ENCODE measurements at regions of chr19 and their contacts with region 1.

Region 1: DNA sequence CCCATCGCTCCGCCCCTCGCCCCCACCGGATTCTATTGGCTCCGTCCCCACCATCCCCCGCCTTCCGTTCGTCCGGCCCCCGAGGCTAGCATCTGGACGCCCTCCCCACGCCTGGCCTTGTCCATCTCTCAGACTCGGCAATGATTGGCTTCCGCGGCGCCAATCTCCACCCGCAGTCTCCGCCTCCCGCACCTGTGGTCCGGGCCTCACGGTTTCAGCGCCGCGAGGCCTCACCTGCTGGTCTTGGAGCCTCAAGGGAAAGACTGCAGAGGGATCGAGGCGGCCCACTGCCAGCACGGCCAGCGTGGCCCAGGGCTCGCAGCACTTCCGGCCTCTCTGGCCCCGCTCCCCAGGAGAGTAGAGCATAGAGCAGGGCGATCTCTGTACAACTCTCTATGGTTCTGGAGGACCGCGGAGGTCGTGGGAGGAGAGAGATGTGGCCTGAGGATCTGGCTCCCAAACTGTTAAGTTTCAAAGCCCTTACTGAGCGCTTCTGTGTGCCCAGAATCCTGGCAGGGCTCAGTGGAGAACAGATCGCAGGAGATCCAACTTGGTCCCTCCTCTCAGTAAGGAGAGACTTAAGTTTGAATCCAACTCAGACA is at the start of gene ERCC1:
- DNase-seq: peak; percentile 96
- ATAC-seq: peak; percentile 82
- H3K4me3 ChIP-seq: peak within 1 kb of the TSS; percentile 93 to 96
- H3K27ac ChIP-seq: peak within 1 kb of the TSS; percentile 99
- H3K4me1 ChIP-seq: peaks cover 38 to 77% of the 10 kb centered on the region in 2 experiments
- H3K27me3 ChIP-seq: no peaks in the 10 kb centered on the region
- CTCF ChIP-seq: no peak
- POLR2A ChIP-seq: peak; percentile 84
- RAD21 ChIP-seq: no peak
- total RNA-seq, gene ERCC1: 103 TPM

Region 2: DNA sequence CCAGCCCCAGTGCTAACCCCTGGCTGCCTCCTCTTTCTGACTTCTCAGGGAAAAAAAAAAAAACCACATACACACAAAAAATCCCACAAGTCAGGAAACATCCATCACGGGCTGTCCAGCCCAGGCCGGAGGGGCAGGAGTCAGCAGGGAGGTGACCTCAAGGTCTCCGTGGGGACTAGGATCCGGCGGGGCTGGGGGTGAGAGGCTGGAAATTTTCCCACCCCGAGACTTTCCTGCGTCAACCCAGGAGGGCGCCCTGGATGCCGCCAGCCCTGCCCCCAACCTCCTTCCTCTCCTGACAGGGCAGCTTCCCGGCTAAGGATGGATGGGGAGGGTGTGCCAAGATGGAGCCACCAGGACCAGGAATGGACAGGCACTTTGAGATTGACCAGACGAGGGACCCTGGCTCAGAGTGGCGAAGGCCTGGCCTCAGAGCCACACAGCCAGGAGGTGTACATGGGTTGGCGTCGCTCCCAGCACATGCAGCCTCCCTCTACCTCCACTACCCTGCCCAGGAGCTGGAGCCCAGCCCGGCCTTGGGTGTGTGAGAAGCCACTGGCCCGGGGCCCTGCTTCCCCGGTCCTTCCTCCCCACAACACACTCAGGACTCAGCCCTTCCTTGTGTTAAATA is 211.8 kb before region 1 on chr19:
- CTCF ChIA-PET with region 1: no interaction called
- POLR2A ChIA-PET with region 1: no interaction called
- RAD21 ChIA-PET with region 1: no interaction called
- intact Hi-C with region 1: no loop called
- DNase-seq: no peak
- ATAC-seq: no peak
- H3K4me3 ChIP-seq: no peak overlapping the region
- H3K27ac ChIP-seq: no peak overlapping the region
- H3K4me1 ChIP-seq: no peaks in the 10 kb centered on the region
- H3K27me3 ChIP-seq: no peaks in the 10 kb centered on the region
- CTCF ChIP-seq: no peak
- POLR2A ChIP-seq: no peak
- RAD21 ChIP-seq: no peak

Region 3: GRCh38 chr19:45405435-45406225 is 18.1 kb before region 1 on chr19:
- CTCF ChIA-PET with region 1: interaction called, 6 read pairs
- POLR2A ChIA-PET with region 1: interaction called, 16 read pairs
- RAD21 ChIA-PET with region 1: no interaction called
- intact Hi-C with region 1: loop called (anchors 1 kb)
- DNase-seq: peak; percentile 92
- ATAC-seq: peak; percentile 64
- H3K4me3 ChIP-seq: peak overlapping the region; percentile 83 to 99
- H3K27ac ChIP-seq: peak overlapping the region; percentile 87
- H3K4me1 ChIP-seq: peaks cover 19 to 53% of the 10 kb centered on the region in 2 experiments
- H3K27me3 ChIP-seq: no peaks in the 10 kb centered on the region
- CTCF ChIP-seq: no peak
- POLR2A ChIP-seq: peak; percentile 42
- RAD21 ChIP-seq: no peak

Region 4: DNA sequence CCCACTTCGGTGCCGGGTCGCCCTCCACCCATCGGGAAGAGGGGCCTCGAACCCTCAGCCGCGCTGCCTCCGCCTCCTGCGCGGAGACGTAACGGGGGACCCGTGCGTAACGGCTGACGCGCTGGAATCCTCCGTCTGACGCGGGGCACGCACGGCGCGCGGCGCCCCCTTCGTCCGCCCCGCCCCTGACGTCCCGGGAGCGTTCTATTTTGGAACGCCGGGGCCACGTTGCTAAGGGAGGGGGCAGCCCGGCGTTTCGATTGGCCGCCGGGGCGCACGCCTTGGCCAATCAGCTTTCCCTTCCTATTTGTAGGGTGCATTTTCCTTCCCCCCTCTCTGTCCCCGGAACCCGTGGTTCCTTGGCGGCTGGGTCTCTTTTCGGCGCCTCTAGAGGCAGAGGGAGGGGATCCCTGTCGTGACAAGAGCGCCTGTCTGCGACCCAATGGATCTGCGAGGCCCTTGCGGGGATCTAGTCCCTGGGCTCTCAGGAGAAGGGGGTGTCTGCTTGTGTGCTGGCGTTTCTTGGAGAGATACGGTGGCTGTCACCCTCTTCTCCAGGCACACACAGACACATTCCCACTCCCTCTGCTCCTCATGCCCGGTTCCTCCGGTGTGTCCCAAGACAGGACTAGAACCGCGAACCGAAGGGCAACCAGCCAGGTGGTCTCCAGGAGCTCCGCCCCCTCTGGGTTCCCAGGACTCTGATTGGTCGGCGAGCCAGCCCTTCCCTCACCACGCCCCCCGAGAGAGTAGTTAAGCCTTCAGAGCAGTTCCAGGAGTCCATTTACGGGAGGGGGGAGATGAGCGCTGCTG is 45.6 kb after region 1 on chr19:
- CTCF ChIA-PET with region 1: interaction called, 7 read pairs
- POLR2A ChIA-PET with region 1: interaction called, 13 read pairs
- RAD21 ChIA-PET with region 1: no interaction called
- intact Hi-C with region 1: no loop called
- DNase-seq: peak; percentile 76
- ATAC-seq: peak; percentile 80
- H3K4me3 ChIP-seq: peak overlapping the region; percentile 74 to 97
- H3K27ac ChIP-seq: peak overlapping the region; percentile 78
- H3K4me1 ChIP-seq: peaks cover 4 to 43% of the 10 kb centered on the region in 2 experiments
- H3K27me3 ChIP-seq: no peaks in the 10 kb centered on the region
- CTCF ChIP-seq: no peak
- POLR2A ChIP-seq: no peak
- RAD21 ChIP-seq: no peak

Region 5: DNA sequence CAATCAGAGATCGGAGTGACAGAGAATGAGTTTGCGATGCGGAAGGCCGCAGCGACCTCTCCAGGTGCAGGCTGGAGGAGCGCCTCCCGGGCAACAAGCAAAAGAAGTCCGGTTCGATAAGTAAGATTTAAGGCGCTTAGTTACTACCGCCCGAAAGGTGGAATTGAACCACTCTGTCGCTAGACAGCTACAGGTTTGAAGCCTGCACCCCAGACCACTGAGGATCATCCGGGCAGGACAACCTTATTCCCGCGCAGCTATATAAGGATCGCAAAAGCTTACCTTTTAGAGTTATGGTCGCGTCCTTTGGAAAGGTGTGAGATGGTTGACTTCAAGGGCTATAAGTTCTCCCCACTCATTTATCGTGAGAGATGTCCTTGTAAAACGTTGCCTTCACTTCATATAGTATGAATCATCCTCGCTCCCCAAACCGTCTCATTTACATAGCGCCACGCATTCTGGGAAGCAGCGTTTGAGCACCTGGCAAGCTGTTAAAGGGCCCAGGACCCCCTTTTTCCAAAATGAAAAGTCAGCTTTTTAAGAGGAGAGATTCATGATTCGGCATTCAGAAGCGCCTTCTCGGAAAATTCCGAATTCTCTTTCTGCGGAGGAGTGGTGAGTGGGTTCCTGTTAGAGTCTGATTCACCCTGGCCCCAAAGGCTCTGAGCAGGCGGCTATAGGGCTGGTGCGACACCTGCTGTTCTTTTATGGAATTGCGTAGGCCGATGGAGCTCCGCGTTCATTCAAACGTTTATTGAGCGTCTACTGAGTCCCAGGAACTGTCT is 55.0 kb after region 1 on chr19:
- CTCF ChIA-PET with region 1: interaction called, 57 read pairs
- POLR2A ChIA-PET with region 1: interaction called, 18 read pairs
- RAD21 ChIA-PET with region 1: interaction called, 4 to 6 read pairs
- intact Hi-C with region 1: loop called (anchors 1 kb)
- DNase-seq: peak; percentile 95
- ATAC-seq: peak; percentile 95
- H3K4me3 ChIP-seq: peak overlapping the region; percentile 37 to 53
- H3K27ac ChIP-seq: peak overlapping the region; percentile 71
- H3K4me1 ChIP-seq: peaks cover 5 to 24% of the 10 kb centered on the region in 2 experiments; a peak in 3 of 4 replicates
- H3K27me3 ChIP-seq: no peaks in the 10 kb centered on the region
- CTCF ChIP-seq: peak; percentile 91 to 99 (median 98)
- POLR2A ChIP-seq: peak; percentile 80
- RAD21 ChIP-seq: peak; percentile 97

Region 6: DNA sequence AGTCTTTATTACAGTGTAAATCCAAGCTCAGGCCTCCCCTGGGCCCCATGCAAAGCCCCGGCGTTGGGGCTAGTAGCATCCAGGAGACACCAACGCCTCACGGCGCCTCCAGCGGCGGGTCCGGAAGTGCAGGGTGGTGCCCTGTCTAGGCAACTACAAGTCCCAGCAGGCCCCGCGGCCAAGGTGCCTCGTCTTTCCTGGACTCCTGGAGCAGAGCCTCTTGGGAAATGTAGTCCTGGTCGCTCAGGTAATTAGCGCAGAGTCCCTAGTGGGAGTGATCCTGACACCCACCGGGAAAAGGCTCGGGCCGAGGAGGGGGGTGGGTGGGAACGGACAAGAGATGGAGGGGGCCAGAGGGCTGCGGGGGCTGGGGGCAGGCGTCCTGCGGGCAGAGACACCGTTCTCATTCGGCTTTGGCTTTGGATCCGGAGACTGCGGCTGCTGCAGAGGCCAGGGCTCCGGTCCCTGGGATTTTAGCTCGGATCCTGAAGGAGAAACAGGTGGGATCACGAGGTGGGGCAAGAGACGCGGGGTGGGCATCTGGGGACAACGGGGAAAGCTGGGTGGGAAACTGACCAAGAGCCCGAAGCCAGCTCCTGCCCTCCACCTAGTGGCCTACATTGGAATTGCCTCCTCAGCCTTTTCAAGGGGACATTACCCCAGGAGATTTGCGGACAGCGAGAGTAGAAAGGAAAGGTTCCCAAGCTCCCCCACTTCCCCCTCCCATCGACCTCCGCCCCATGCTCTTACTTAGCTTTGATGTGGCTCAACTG is 61.8 kb after region 1 on chr19:
- CTCF ChIA-PET with region 1: interaction called, 13 read pairs
- POLR2A ChIA-PET with region 1: interaction called, 3 read pairs
- RAD21 ChIA-PET with region 1: no interaction called
- intact Hi-C with region 1: no loop called
- DNase-seq: peak; percentile 91
- ATAC-seq: peak; percentile 95
- H3K4me3 ChIP-seq: peak overlapping the region; percentile 41 to 51
- H3K27ac ChIP-seq: peak overlapping the region; percentile 44; the same call in 1 of the 2 replicates
- H3K4me1 ChIP-seq: peaks cover 13 to 28% of the 10 kb centered on the region in 2 experiments
- H3K27me3 ChIP-seq: no peaks in the 10 kb centered on the region
- CTCF ChIP-seq: peak; percentile 68 to 94 (median 86)
- POLR2A ChIP-seq: no peak
- RAD21 ChIP-seq: peak; percentile 64